ENCODE measurements at regions of chr17 and their contacts with region 1.

Region 1: DNA sequence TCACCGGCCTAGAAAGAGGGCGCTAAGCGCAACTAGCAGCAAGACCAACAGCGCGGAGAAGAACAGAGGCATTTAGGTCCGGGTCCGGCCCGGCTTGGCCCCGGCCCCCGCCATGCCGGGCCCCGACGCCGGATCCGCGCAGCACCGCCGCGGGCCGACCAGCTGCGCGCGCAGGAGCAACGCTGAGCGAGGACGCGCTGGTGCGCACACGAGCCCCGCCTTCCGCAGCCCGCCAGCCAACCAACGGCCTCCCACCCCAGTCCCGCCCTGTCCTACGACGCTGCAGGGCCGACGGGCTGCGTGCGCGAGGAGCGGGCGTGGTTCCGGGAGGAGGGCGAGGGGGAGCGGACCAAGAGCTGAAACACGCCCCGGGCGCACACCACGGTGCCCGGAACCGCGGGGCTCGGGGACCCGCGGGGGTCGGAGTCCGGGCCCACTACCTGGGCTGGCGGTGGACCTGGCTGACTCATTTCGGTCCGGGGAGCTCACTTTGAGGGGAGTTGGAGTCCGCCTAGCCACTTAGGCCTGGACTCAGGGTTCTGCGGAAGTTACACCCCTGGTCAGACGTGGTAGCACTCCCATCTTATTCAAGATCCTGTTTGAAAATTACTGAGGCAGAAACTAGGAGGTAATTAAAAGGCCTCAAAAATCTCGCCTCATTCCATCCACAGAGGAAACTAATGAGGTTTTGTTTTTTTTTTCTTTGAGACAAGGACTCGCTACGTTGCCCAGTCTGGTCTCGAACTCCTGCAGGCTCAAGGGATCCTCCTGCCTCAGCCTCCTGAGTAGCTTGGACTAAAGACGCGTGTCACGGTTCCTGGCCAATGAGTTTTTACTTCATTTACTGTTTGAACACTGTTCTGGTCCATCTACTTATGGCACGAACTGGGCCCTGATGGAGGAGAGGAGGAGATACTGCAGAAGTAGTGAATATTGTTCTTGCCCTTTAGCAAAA is at the start of gene BLTP2:
- DNase-seq: peak; percentile 78 to 91
- H3K4me3 ChIP-seq: peak within 1 kb of the TSS; percentile 74 to 97 (median 88)
- H3K27ac ChIP-seq: peak within 1 kb of the TSS; percentile 50; the same call in 1 of the 2 replicates
- H3K4me1 ChIP-seq: 0 out of 7 replicates have a peak, but pooled peaks cover 0 to 2% (median under 1%) of the 10 kb centered on the region in 4 experiments
- H3K27me3 ChIP-seq: no peaks in the 10 kb centered on the region
- CTCF ChIP-seq: no peak
- EP300 ChIP-seq: no peak
- POLR2A ChIP-seq: peak in 1 of 2 experiments; percentile 69; a peak in 1 of 3 replicates
- RAD21 ChIP-seq: no peak
- total RNA-seq, gene BLTP2: 123 and 140 TPM in 2 replicates

Region 2: DNA sequence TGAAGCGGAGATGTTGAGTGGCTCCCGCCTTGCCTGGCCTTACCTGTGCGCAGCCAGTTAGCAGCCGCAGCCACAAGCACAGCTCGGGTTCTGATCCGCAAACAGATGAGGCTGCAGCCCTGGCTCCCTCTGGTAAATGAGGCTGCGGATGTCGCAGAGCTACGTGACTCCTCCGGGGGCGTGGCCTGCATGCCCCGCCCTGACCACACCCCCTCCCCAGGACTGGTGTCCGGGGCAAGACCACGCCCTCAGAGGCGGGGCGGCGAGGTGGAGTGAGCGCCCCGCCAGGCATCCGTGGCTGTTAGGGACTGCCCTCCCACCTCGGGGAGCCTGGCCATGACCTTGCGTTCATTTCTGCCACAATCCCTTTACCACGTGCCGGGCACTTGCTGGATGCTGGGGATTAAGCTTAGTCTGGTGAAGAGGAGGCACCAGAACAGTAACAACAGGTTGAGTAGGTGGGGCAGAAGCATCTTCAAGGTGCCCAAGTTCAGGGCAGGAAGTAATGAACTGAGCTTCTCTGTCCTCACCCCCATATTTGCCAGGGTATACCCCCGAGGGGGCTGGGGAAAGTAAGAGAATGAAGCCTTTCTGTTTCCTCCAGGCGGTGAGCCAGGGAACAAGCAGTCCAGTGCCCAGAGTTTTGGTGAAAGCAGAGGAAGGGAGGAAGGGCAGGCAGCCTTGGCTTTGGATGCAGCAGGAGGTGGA is 68.3 kb before region 1 on chr17 and contains the start of gene ALDOC:
- CTCF ChIA-PET with region 1: interaction called, 4 read pairs
- POLR2A ChIA-PET with region 1: interaction called, 24 read pairs
- DNase-seq: peak; percentile 97 to 99
- H3K4me3 ChIP-seq: peak within 1 kb of the TSS; percentile 12 to 54 (median 20); a peak in 5 of 8 replicates
- H3K27ac ChIP-seq: no peak within 1 kb of the TSS
- H3K4me1 ChIP-seq: peaks cover 2 to 9% (median 5%) of the 10 kb centered on the region in 4 experiments; a peak in 6 of 7 replicates
- H3K27me3 ChIP-seq: peaks cover 0 to 8% (median 4%) of the 10 kb centered on the region in 4 experiments; a peak in 4 of 7 replicates
- CTCF ChIP-seq: no peak
- EP300 ChIP-seq: no peak
- POLR2A ChIP-seq: peak; percentile 80 to 84
- RAD21 ChIP-seq: no peak
- total RNA-seq, gene ALDOC: 51.3 and 51.6 TPM in 2 replicates

Region 3: GRCh38 chr17:28661635-28662537 is 16.6 kb after region 1 on chr17 and contains the starts of genes SDF2 and SUPT6H:
- CTCF ChIA-PET with region 1: interaction called, 38 read pairs
- POLR2A ChIA-PET with region 1: interaction called, 55 read pairs
- DNase-seq: peak in 1 of 2 experiments; percentile 98
- H3K4me3 ChIP-seq: peak within 1 kb of the TSS; percentile 85 to 99 (median 96)
- H3K27ac ChIP-seq: peak within 1 kb of the TSS; percentile 92
- H3K4me1 ChIP-seq: peaks cover 0 to 2% (median 0%) of the 10 kb centered on the region in 4 experiments; a peak in 3 of 7 replicates
- H3K27me3 ChIP-seq: no peaks in the 10 kb centered on the region
- CTCF ChIP-seq: no peak
- EP300 ChIP-seq: no peak
- POLR2A ChIP-seq: peak; percentile 75 to 76; a peak in 2 of 3 replicates
- RAD21 ChIP-seq: no peak
- total RNA-seq, gene SDF2: 43.6 and 44.8 TPM in 2 replicates
- total RNA-seq, gene SUPT6H: 59.9 and 62.4 TPM in 2 replicates

Region 4: GRCh38 chr17:28675980-28676379 is 30.7 kb after region 1 on chr17:
- CTCF ChIA-PET with region 1: interaction called, 54 read pairs
- POLR2A ChIA-PET with region 1: interaction called, 10 read pairs
- DNase-seq: no peak
- H3K4me3 ChIP-seq: no peak overlapping the region
- H3K27ac ChIP-seq: no peak overlapping the region
- H3K4me1 ChIP-seq: no peaks in the 10 kb centered on the region
- H3K27me3 ChIP-seq: no peaks in the 10 kb centered on the region
- CTCF ChIP-seq: peak; percentile 34 to 38 (median 35)
- EP300 ChIP-seq: no peak
- POLR2A ChIP-seq: no peak
- RAD21 ChIP-seq: peak; percentile 21 to 43; a peak in 3 of 4 replicates

Region 5: GRCh38 chr17:28710861-28711722 is 65.8 kb after region 1 on chr17:
- CTCF ChIA-PET with region 1: interaction called, 3 read pairs
- POLR2A ChIA-PET with region 1: interaction called, 29 read pairs
- DNase-seq: peak; percentile 83 to 96
- H3K4me3 ChIP-seq: peak overlapping the region; percentile 59 to 85 (median 82)
- H3K27ac ChIP-seq: peak overlapping the region; percentile 98
- H3K4me1 ChIP-seq: peaks cover 5 to 17% (median 9%) of the 10 kb centered on the region in 4 experiments; a peak in 6 of 7 replicates
- H3K27me3 ChIP-seq: no peaks in the 10 kb centered on the region
- CTCF ChIP-seq: no peak
- EP300 ChIP-seq: no peak
- POLR2A ChIP-seq: peak; percentile 96 to 99
- RAD21 ChIP-seq: no peak

Region 6: DNA sequence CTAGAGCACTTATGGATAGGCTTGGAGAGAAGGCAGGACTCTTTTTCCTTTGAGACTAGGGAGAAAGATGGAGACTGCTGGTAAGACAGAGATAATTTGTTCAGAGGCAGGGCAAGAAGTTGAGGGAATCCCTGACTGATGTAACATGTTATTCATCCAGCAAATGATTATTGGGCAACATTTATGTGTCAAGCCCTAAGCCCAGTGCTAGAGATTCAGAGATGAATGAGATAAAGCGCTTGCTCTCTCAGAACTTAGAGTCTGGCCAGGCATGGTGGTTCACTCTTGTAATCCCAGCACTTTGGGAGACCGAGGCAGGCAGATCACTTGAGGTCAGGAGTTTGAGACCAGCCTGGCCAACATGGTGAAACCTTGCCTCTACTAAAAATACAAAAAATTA is 696.5 kb after region 1 on chr17:
- CTCF ChIA-PET with region 1: no interaction called
- POLR2A ChIA-PET with region 1: no interaction called
- DNase-seq: no peak
- H3K4me3 ChIP-seq: no peak overlapping the region
- H3K27ac ChIP-seq: no peak overlapping the region
- H3K4me1 ChIP-seq: no peaks in the 10 kb centered on the region
- H3K27me3 ChIP-seq: no peaks in the 10 kb centered on the region
- CTCF ChIP-seq: no peak
- EP300 ChIP-seq: no peak
- POLR2A ChIP-seq: no peak
- RAD21 ChIP-seq: no peak

Measured in H1 (cell line).